Caco-2 (cell line): ENCODE measurements at regions of chr10 and their contacts with region 1.

Region 1: DNA sequence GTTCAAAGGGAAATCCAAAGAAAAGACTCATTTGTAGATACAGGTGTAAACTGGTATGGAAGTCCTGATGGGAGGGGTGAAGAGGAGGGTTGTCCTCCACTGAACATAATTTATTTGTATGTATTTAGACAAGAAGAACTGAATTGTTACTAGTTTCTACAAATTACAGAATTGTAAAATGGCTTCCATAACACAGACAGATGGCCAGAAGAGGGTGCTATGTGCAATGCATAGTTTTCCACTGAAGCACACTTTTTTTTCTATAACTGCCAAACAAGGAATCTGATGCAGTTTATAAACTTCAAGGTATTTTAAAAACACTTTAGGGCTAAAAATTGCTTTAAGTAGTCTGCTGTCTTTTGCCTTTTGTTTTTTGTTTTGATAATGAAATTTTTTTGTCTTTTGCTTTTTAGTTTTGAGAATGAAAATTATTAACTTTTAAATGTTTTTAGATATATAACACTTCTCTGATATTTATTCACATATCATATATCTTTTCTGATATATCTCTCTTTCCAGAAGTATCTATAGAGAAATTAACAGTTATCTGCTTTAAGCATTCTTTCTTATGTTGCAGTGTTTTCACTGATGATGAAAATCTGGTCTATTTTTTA is 58.5 kb downstream of the PHYHIPL start:
- DNase-seq: peak; percentile 36 to 67
- H3K4me3 ChIP-seq: no peak overlapping the region
- H3K4me3 Mint-ChIP-seq: no peak overlapping the region
- H3K27ac Mint-ChIP-seq: no peak overlapping the region
- H3K4me1 ChIP-seq: no peaks in the 10 kb centered on the region
- H3K4me1 Mint-ChIP-seq: peaks cover 15% of the 10 kb centered on the region
- H3K27me3 ChIP-seq: no peaks in the 10 kb centered on the region
- H3K27me3 Mint-ChIP-seq: no peaks in the 10 kb centered on the region
- CTCF ChIP-seq: peak; percentile 82 to 89

Region 2: GRCh38 chr10:59216178-59216869 is 18.6 kb before region 1 on chr10:
- CTCF ChIA-PET with region 1: no interaction called
- POLR2A ChIA-PET with region 1: no interaction called
- intact Hi-C with region 1: no loop called
- DNase-seq: no peak
- H3K4me3 ChIP-seq: no peak overlapping the region
- H3K4me3 Mint-ChIP-seq: no peak overlapping the region
- H3K27ac Mint-ChIP-seq: no peak overlapping the region
- H3K4me1 ChIP-seq: peaks cover 16% of the 10 kb centered on the region
- H3K4me1 Mint-ChIP-seq: peaks cover 21% of the 10 kb centered on the region
- H3K27me3 ChIP-seq: no peaks in the 10 kb centered on the region
- H3K27me3 Mint-ChIP-seq: no peaks in the 10 kb centered on the region
- CTCF ChIP-seq: no peak

Region 3: GRCh38 chr10:59303018-59303417 is 68.1 kb after region 1 on chr10:
- CTCF ChIA-PET with region 1: no interaction called
- POLR2A ChIA-PET with region 1: no interaction called
- intact Hi-C with region 1: no loop called
- DNase-seq: no peak
- H3K4me3 ChIP-seq: no peak overlapping the region
- H3K4me3 Mint-ChIP-seq: no peak overlapping the region
- H3K27ac Mint-ChIP-seq: no peak overlapping the region
- H3K4me1 ChIP-seq: no peaks in the 10 kb centered on the region
- H3K4me1 Mint-ChIP-seq: no peaks in the 10 kb centered on the region
- H3K27me3 ChIP-seq: no peaks in the 10 kb centered on the region
- H3K27me3 Mint-ChIP-seq: peaks cover 10% of the 10 kb centered on the region
- CTCF ChIP-seq: no peak

Region 4: GRCh38 chr10:59387951-59388670 is 153.2 kb after region 1 on chr10:
- CTCF ChIA-PET with region 1: no interaction called
- POLR2A ChIA-PET with region 1: interaction called, 21 read pairs
- intact Hi-C with region 1: no loop called
- DNase-seq: no peak
- H3K4me3 ChIP-seq: no peak overlapping the region
- H3K4me3 Mint-ChIP-seq: no peak overlapping the region
- H3K27ac Mint-ChIP-seq: no peak overlapping the region
- H3K4me1 ChIP-seq: no peaks in the 10 kb centered on the region
- H3K4me1 Mint-ChIP-seq: no peaks in the 10 kb centered on the region
- H3K27me3 ChIP-seq: no peaks in the 10 kb centered on the region
- H3K27me3 Mint-ChIP-seq: peaks cover 8% of the 10 kb centered on the region
- CTCF ChIP-seq: no peak